ENCODE measurements at regions of chr7 and their contacts with region 1.

Region 1: GRCh38 chr7:31134246-31135188 is 82.4 kb downstream of the ADCYAP1R1 start:
- DNase-seq: peak; percentile 57
- H3K4me3 Mint-ChIP-seq: no peak overlapping the region
- H3K27ac Mint-ChIP-seq: no peak overlapping the region
- H3K4me1 Mint-ChIP-seq: peaks cover 4% of the 10 kb centered on the region
- H3K27me3 Mint-ChIP-seq: peaks cover 1% of the 10 kb centered on the region

Region 2: DNA sequence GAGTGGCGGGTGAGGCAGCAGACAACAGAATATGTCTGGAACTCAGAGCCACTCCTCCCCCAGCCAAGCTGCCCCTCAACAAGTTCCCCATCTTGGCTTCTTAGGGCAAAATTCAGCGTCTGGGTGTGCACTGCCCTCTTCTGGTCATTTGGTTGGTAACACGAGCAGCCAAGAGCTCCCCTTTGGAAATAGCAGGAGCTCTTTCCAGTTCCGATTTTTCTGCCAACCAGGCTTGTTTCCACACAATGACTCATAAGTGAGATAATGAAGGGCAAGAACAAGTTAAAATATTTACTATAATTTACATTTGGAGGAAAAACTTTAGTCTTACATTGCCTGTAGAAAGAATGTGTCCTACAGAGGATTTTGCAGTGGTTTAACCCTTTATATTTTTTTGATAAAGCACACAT is 11.9 kb before region 1 on chr7:
- CTCF ChIA-PET with region 1: interaction called, 112 read pairs
- POLR2A ChIA-PET with region 1: no interaction called
- intact Hi-C with region 1: no loop called
- DNase-seq: peak; percentile 57
- H3K4me3 Mint-ChIP-seq: no peak overlapping the region
- H3K27ac Mint-ChIP-seq: no peak overlapping the region
- H3K4me1 Mint-ChIP-seq: no peaks in the 10 kb centered on the region
- H3K27me3 Mint-ChIP-seq: peaks cover 9% of the 10 kb centered on the region

Region 3: GRCh38 chr7:31175672-31176071 is 41.2 kb after region 1 on chr7:
- CTCF ChIA-PET with region 1: no interaction called
- POLR2A ChIA-PET with region 1: no interaction called
- intact Hi-C with region 1: no loop called
- DNase-seq: no peak
- H3K4me3 Mint-ChIP-seq: no peak overlapping the region
- H3K27ac Mint-ChIP-seq: no peak overlapping the region
- H3K4me1 Mint-ChIP-seq: no peaks in the 10 kb centered on the region
- H3K27me3 Mint-ChIP-seq: no peaks in the 10 kb centered on the region

Region 4: GRCh38 chr7:31488562-31489203 is 354.2 kb after region 1 on chr7:
- CTCF ChIA-PET with region 1: interaction called, 5 read pairs
- POLR2A ChIA-PET with region 1: no interaction called
- intact Hi-C with region 1: loop called (anchors 2 kb)
- DNase-seq: peak; percentile 48
- H3K4me3 Mint-ChIP-seq: no peak overlapping the region
- H3K27ac Mint-ChIP-seq: no peak overlapping the region
- H3K4me1 Mint-ChIP-seq: no peaks in the 10 kb centered on the region
- H3K27me3 Mint-ChIP-seq: no peaks in the 10 kb centered on the region